Heart left ventricle (tissue), 16 donors: ENCODE measurements at regions of chr15 and their contacts with region 1.

Region 1: DNA sequence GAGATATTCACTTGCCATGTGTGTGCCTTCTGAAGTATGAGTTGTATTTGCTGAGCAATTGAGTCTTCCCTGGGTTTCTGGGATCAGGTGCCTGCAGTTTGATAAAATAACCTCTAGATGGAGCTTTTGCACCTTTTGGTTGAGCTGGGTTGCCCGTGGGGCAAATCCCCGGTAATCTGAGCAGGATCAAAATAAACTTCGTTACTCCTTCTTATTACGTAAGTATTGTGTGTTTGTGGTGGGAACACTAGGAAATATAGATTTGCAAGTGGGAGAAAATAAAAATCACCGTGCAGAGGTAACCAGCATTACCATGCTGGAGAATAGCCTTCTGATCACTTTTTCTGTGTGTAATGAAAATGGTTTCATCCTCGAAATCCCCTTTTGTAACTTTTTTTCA is 277.4 kb upstream of the NR2E3 start:
- DNase-seq: no peak
- ATAC-seq: peak in 1 of 4 donors; percentile 23
- H3K4me3 ChIP-seq: no peak overlapping the region
- H3K27ac ChIP-seq: no peak overlapping the region
- H3K4me1 ChIP-seq: peaks cover 0 to 11% (median 0%) of the 10 kb centered on the region in 12 donors
- H3K27me3 ChIP-seq: no peaks in the 10 kb centered on the region
- CTCF ChIP-seq: peak; percentile 24 to 59 (median 48)
- POLR2A ChIP-seq: no peak

Region 2: GRCh38 chr15:71329497-71330260 is 203.3 kb before region 1 on chr15:
- intact Hi-C with region 1: no loop called
- DNase-seq: peak in 3 of 5 donors; percentile 26 to 51 (median 47)
- ATAC-seq: peak; percentile 66 to 82 (median 74)
- H3K4me3 ChIP-seq: no peak overlapping the region
- H3K27ac ChIP-seq: peak overlapping the region; percentile 14 to 94 (median 78)
- H3K4me1 ChIP-seq: peaks cover 0 to 59% (median 26%) of the 10 kb centered on the region in 12 donors
- H3K27me3 ChIP-seq: no peaks in the 10 kb centered on the region
- CTCF ChIP-seq: no peak
- POLR2A ChIP-seq: no peak

Region 3: GRCh38 chr15:71461748-71462147 is 71.2 kb before region 1 on chr15:
- intact Hi-C with region 1: loop called in 1 of 10 experiments (anchors 5 kb)
- DNase-seq: no peak
- ATAC-seq: no peak
- H3K4me3 ChIP-seq: no peak overlapping the region
- H3K27ac ChIP-seq: no peak overlapping the region
- H3K4me1 ChIP-seq: peaks cover 0 to 43% (median 20%) of the 10 kb centered on the region in 12 donors
- H3K27me3 ChIP-seq: no peaks in the 10 kb centered on the region
- CTCF ChIP-seq: no peak
- POLR2A ChIP-seq: no peak

Region 4: DNA sequence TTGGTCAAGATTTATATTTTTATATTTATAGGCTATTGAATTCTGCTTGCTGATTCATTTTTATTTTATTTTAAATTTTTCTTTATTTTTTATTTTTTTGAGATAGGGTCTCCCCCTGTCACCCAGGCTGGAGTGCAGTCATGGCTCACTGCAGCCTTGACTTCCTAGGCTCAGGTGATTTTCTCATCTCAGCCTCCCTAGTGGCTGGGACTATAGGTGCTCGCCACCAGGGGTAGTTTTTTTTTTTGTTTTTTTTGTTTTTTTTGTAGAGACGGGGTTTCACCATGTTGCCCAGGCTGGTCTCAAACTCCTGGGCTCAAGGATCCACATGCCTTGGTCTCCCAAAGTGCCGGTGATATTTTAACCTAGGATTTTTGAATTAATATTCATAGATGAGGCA is 308.6 kb after region 1 on chr15:
- intact Hi-C with region 1: no loop called
- DNase-seq: no peak
- ATAC-seq: no peak
- H3K4me3 ChIP-seq: no peak overlapping the region
- H3K27ac ChIP-seq: no peak overlapping the region
- H3K4me1 ChIP-seq: peaks cover 0 to 3% (median 0%) of the 10 kb centered on the region in 12 donors
- H3K27me3 ChIP-seq: no peaks in the 10 kb centered on the region
- CTCF ChIP-seq: no peak
- POLR2A ChIP-seq: no peak

Region 5: DNA sequence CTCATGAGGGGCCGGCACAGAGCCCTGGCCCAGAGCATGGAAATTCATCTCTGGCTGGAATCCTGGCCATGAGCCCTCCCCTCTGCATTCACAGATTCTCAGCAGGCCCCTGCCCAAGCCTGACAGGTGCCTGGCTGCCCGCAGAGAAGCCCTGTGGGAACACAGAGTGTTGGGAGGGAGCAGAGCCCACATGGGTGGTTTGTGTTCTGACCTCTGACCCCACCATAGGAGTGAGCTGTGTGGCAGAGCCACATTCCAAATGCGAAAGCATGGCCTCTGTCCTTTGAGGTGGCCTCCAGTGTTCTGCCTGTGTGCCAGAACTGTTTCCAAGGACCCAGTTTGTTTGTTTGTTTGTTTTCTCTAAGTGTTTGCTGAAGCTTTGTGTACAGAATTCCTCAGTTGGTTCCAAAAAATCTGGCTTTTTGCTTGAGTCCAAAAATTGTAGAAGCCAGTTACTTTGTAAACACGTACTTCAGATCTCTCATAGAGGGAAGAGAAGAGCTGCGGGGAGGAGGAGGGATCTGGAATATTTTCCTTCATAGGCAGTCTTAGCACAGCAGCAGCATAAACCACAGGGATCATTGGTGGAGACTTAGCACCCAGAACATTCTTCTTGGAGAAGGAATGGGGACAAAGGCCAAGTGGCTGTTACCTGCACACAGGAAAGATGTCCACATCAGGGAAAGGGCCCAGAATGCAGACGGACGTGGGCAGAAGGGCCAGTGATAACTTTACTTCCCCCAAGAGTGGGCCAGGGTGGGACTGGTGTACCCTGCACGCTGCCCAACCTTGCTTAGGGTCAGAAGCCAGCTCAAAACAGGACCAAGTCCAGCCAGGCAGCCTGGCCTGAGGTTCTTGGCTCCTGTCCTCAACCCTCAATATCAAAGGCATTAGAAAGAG is 628.6 kb after region 1 on chr15:
- intact Hi-C with region 1: no loop called
- DNase-seq: no peak
- ATAC-seq: no peak
- H3K4me3 ChIP-seq: no peak overlapping the region
- H3K27ac ChIP-seq: no peak overlapping the region
- H3K4me1 ChIP-seq: no peaks in the 10 kb centered on the region
- H3K27me3 ChIP-seq: no peaks in the 10 kb centered on the region
- CTCF ChIP-seq: no peak
- POLR2A ChIP-seq: no peak